ENCODE measurements at regions of chr3 and their contacts with region 1.

Region 1: GRCh38 chr3:189324538-189325138 is 152.9 kb downstream of the TPRG1 start:
- DNase-seq: peak; percentile 85
- H3K4me3 Mint-ChIP-seq: peak overlapping the region; percentile 83
- H3K27ac Mint-ChIP-seq: peak overlapping the region; percentile 99
- H3K4me1 Mint-ChIP-seq: peaks cover 72% of the 10 kb centered on the region
- H3K27me3 Mint-ChIP-seq: peaks cover 3% of the 10 kb centered on the region

Region 2: DNA sequence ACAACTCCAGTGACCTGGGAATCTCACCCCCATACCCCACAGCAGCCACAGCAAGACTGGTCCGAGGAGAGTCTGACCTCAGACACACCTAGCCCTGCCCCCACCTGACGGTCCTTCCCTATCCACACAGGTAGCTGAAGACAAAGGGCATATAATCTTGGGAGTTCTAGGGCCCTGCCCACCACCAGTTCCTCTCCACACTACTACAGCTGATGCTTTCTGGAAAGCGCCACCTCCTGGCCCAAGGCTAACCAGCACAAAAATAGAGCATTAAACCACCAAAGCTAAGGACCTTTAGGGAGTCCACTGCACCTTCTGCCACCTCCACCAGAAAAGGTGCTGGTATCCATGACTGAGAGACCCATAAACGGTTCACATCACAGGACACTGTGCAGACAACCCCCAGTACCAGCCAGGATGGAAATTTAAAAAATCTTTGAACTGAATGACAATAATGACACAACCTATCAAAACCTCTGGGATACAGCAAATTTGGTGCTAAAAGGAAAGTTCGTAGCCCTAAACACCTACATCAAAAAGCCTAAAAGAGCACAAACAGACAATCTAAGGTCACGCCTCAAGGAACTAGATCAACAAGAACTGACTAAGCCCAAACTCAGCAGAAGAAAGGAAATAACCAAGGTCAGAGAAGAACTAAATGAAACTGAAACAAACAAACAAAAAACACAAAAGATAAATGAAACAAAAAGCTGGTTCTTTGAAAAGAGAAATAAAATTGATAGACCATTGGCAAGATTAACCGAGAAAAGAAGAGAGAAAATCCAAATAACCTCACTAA is 275.0 kb before region 1 on chr3:
- intact Hi-C with region 1: loop called (anchors 5 kb)
- DNase-seq: peak; percentile 12
- H3K4me3 Mint-ChIP-seq: peak overlapping the region; percentile 32
- H3K27ac Mint-ChIP-seq: peak overlapping the region; percentile 83
- H3K4me1 Mint-ChIP-seq: peaks cover 55% of the 10 kb centered on the region
- H3K27me3 Mint-ChIP-seq: peaks cover 2% of the 10 kb centered on the region

Region 3: DNA sequence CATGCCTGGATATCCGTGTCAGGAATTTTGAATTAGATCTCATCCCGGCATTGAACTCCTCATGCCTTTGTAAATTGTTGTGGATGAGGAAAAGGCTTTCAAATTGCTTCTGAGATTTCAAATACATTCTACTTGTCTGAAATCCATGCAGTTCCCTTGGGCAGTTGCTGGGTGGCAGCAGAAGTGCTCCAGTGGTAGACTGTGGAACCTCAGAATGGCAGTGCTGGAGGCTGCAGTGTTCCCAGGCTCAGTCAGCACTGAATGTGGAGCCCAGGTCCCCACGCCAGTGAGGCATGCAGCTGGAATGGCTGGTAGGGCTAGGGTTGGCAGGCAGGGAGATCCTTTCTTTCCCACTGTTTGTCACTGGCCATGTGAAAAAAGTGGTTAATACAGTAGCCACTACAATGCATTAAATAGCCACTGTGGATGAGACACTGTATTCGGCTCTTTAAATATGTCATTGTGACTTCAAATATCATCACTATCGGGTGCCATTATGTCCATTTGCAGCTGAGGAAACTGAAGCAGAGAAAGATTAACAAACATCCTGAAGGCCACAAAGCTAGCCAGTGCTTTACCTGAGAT is 54.3 kb before region 1 on chr3:
- intact Hi-C with region 1: loop called (anchors 2 kb)
- DNase-seq: peak; percentile 7
- H3K4me3 Mint-ChIP-seq: no peak overlapping the region
- H3K27ac Mint-ChIP-seq: no peak overlapping the region
- H3K4me1 Mint-ChIP-seq: peaks cover 15% of the 10 kb centered on the region
- H3K27me3 Mint-ChIP-seq: no peaks in the 10 kb centered on the region

Region 4: DNA sequence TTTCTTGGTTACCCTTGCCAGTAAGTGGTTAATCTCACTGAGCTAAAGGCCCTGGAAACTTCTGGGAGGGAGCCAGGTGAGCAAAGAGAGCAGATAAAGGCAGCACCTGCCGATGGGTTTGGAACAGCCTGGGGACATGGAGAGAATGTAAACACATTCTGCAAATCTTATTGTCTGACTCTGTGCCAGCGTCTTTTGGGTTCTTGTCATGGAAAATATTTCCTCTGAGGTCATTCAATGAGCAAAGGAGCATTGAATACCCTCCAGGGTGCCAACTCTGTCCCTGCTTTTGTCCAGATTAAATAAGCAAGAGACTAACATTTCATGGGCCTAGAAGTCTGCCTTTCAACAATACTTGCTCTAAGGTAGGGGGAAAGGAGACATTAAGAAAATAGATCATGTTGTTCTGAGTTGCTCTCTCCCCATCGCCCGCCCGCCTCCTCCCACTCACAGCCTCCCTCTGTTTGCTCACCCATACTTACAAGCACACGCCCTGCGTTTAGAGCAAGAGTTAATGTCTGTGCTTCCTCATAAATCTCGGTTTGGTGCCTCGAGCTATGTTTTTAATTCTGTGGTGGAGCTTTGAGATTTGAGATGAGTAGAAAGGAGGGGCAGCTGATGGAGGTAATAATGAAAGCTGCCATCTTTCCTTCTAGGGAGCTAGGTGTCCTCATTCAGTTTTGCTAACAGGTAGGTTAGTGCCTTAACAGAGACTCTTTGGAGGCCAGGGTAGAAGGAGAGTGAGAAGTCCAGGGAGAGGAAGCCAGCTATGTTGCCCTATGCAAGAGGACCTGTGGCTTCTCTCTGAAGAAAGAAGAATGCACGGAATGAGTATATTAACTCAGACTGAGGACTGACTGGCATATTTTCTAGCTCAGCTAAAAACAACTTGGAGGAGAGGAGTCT is 19.9 kb before region 1 on chr3:
- intact Hi-C with region 1: loop called (anchors 1 kb)
- DNase-seq: no peak
- H3K4me3 Mint-ChIP-seq: peak overlapping the region; percentile 57
- H3K27ac Mint-ChIP-seq: peak overlapping the region; percentile 91
- H3K4me1 Mint-ChIP-seq: peaks cover 64% of the 10 kb centered on the region
- H3K27me3 Mint-ChIP-seq: no peaks in the 10 kb centered on the region

Region 5: GRCh38 chr3:189530822-189531221 is 206.2 kb after region 1 on chr3:
- intact Hi-C with region 1: loop called (anchors 1 kb)
- DNase-seq: no peak
- H3K4me3 Mint-ChIP-seq: no peak overlapping the region
- H3K27ac Mint-ChIP-seq: peak overlapping the region; percentile 61
- H3K4me1 Mint-ChIP-seq: peaks cover 24% of the 10 kb centered on the region
- H3K27me3 Mint-ChIP-seq: no peaks in the 10 kb centered on the region

Region 6: GRCh38 chr3:189554868-189555557 is 230.4 kb after region 1 on chr3:
- intact Hi-C with region 1: no loop called
- DNase-seq: no peak
- H3K4me3 Mint-ChIP-seq: no peak overlapping the region
- H3K27ac Mint-ChIP-seq: no peak overlapping the region
- H3K4me1 Mint-ChIP-seq: no peaks in the 10 kb centered on the region
- H3K27me3 Mint-ChIP-seq: no peaks in the 10 kb centered on the region

Region 7: GRCh38 chr3:190617185-190617584 is 1292.5 kb after region 1 on chr3:
- intact Hi-C with region 1: loop called (anchors 5 kb)
- DNase-seq: peak; percentile 58
- H3K4me3 Mint-ChIP-seq: peak overlapping the region; percentile 61
- H3K27ac Mint-ChIP-seq: peak overlapping the region; percentile 97
- H3K4me1 Mint-ChIP-seq: peaks cover 91% of the 10 kb centered on the region
- H3K27me3 Mint-ChIP-seq: no peaks in the 10 kb centered on the region

Measured in activated T-helper 1 cell treated with anti-CD3 and anti-CD28 coated beads, Interleukin-12 subunit alpha, Interleukin-12 subunit beta, Interleukin-2, Interleukin-4 antibody, amounts not matched to agents 30 ng/mL and 10 ng/mL and 1 ng/mL, durations not matched to agents 14 hours and 24 hours and 36 hours (primary cell).